ENCODE measurements at regions of chr3 and their contacts with region 1.

Region 1: GRCh38 chr3:46959161-46959511 is 17.4 kb downstream of the CCDC12 start:
- DNase-seq: peak; percentile 71
- ATAC-seq: peak; percentile 92
- H3K4me3 Mint-ChIP-seq: peak overlapping the region; percentile 2
- H3K27ac Mint-ChIP-seq: peak overlapping the region; percentile 88
- H3K4me1 Mint-ChIP-seq: peaks cover 86% of the 10 kb centered on the region
- H3K27me3 Mint-ChIP-seq: no peaks in the 10 kb centered on the region

Region 2: DNA sequence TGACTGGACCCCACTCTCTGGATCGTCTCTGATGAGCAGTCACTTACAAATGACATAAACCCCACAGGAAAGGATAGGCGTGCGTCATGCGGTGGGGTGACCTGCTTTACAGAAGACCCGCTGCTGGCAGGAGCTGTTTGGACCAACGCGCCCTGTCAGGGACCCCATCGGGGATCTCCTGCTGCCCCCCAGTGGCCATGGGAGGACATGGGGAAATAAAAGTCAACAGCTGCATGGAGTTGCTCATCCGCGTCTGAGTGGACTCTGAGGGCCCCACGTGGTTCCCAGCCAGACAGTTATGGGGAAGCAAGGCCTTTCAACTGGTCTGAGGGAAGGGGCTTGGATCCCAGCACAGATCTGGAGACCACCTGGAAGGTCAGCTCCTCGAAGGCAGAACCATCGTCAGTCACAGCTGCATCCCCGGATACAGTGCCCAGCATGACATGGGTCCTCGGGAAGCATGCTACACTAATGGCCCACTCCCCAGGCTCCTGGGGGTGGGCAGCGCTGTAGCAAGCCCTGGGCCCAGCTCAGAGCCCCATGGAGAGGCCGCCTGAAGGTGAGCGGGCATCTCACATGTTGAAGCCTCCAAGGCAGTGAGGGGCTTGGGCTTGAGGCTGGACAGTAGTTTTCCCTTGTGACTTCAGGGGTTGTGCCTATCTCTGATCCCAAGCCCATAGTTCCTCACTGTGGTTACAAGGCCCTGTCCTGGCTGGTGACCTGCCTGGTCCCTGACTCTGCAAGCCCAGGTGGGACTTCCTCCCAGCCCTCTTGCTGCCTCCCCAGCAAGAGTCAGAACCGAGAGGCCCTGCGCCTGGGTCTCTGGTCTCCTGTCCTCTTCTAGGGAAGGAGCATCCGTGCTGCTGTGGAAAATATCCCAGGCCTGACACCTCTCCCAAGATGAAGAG is 49.3 kb before region 1 on chr3:
- CTCF ChIA-PET with region 1: interaction called, 6 read pairs
- POLR2A ChIA-PET with region 1: interaction called, 10 read pairs
- intact Hi-C with region 1: no loop called
- DNase-seq: peak; percentile 91
- ATAC-seq: peak; percentile 96
- H3K4me3 Mint-ChIP-seq: no peak overlapping the region
- H3K27ac Mint-ChIP-seq: no peak overlapping the region
- H3K4me1 Mint-ChIP-seq: peaks cover 18% of the 10 kb centered on the region
- H3K27me3 Mint-ChIP-seq: no peaks in the 10 kb centered on the region

Region 3: DNA sequence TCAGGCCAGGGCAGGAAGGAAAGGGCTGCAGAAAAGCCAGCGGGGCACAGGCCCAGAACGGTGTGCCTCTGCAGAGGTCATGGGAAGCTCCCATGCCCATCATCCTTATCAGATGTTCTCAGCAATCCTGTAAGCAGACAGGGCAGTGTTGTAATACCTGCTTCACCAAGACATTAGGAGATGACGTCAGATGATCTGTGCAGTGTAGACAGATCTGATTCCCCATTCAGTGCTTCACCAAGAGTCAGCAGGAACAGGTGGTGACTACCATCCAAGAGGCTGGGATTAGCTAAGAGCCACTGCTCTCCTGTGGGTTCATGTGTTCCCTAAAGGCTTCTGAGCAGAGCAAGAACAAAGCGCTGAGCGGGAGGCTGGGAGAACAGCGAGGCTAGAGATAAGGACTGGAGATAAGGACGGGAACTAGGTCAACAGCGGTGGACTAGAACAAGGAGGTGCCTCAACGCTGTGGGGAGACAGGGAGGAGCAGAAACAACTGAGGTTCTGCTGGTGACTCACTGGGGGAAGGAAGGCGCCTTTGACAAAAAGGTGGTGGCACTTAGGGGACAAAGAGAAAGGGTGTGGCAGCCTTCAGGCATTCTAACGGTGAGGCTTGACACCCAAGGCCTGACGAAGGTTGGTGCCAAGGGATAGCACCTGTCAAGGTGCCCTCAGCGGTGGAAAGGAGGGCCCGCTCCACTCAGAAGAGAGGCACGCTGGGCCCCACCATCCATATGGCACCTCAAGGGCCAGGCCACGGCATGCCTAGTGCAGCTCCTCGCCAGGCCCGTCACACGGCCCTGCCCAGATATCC is 10.9 kb before region 1 on chr3:
- CTCF ChIA-PET with region 1: interaction called, 13 read pairs
- POLR2A ChIA-PET with region 1: interaction called, 8 read pairs
- intact Hi-C with region 1: loop called in 1 of 2 experiments (anchors 1 kb)
- DNase-seq: peak; percentile 77
- ATAC-seq: peak; percentile 81
- H3K4me3 Mint-ChIP-seq: peak overlapping the region; percentile 62
- H3K27ac Mint-ChIP-seq: peak overlapping the region; percentile 92
- H3K4me1 Mint-ChIP-seq: peaks cover 80% of the 10 kb centered on the region
- H3K27me3 Mint-ChIP-seq: no peaks in the 10 kb centered on the region

Region 4: GRCh38 chr3:47009225-47010110 is 50.3 kb after region 1 on chr3:
- CTCF ChIA-PET with region 1: no interaction called
- POLR2A ChIA-PET with region 1: no interaction called
- intact Hi-C with region 1: loop called in 1 of 2 experiments (anchors 2 kb)
- DNase-seq: peak; percentile 84
- ATAC-seq: peak; percentile 93
- H3K4me3 Mint-ChIP-seq: peak overlapping the region; percentile 57
- H3K27ac Mint-ChIP-seq: peak overlapping the region; percentile 58
- H3K4me1 Mint-ChIP-seq: peaks cover 4% of the 10 kb centered on the region
- H3K27me3 Mint-ChIP-seq: no peaks in the 10 kb centered on the region

Region 5: DNA sequence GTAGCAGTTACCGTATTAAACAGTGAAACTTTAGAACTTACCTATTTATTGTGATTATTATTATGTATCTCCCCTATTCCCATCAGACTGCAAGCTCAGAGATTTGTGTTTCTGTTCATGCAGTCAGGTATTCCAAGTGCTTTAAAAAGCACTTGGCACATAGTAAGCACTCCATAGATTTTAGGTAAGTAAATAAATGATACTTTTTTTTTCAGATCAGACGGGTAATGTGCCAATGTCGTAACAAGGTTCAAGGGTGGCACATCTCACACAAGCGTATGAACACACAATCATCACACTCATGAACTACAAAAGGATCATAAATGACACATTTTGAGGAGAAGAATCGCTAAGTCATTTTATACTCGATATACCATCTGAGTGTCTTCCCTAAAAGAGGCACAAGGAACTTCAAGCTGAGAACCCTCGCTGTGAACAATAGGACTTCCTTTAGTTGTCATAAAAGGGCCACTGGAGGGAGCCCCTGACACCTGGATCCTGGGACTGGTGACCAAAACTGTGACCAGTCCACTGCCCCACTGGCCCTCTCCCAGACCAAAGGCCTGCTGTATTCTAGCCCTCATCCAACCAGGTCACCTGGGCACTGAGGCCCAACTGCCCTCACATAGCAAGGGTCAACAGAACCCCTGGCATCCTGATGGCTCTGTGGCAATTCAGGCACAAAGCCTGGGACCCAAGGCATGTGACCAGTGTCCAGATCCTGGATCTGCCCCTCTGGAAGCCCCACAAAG is 291.3 kb after region 1 on chr3:
- CTCF ChIA-PET with region 1: no interaction called
- POLR2A ChIA-PET with region 1: no interaction called
- intact Hi-C with region 1: no loop called
- DNase-seq: no peak
- ATAC-seq: no peak
- H3K4me3 Mint-ChIP-seq: no peak overlapping the region
- H3K27ac Mint-ChIP-seq: no peak overlapping the region
- H3K4me1 Mint-ChIP-seq: no peaks in the 10 kb centered on the region
- H3K27me3 Mint-ChIP-seq: no peaks in the 10 kb centered on the region

Region 6: GRCh38 chr3:47315069-47315647 is 356.0 kb after region 1 on chr3:
- CTCF ChIA-PET with region 1: no interaction called
- POLR2A ChIA-PET with region 1: no interaction called
- intact Hi-C with region 1: no loop called
- DNase-seq: no peak
- ATAC-seq: no peak
- H3K4me3 Mint-ChIP-seq: no peak overlapping the region
- H3K27ac Mint-ChIP-seq: no peak overlapping the region
- H3K4me1 Mint-ChIP-seq: peaks cover 12% of the 10 kb centered on the region
- H3K27me3 Mint-ChIP-seq: no peaks in the 10 kb centered on the region

Region 7: GRCh38 chr3:47347217-47347801 is 388.2 kb after region 1 on chr3:
- CTCF ChIA-PET with region 1: no interaction called
- POLR2A ChIA-PET with region 1: no interaction called
- intact Hi-C with region 1: no loop called
- DNase-seq: no peak
- ATAC-seq: no peak
- H3K4me3 Mint-ChIP-seq: no peak overlapping the region
- H3K27ac Mint-ChIP-seq: no peak overlapping the region
- H3K4me1 Mint-ChIP-seq: peaks cover 2% of the 10 kb centered on the region
- H3K27me3 Mint-ChIP-seq: no peaks in the 10 kb centered on the region

Measured in activated CD4-positive, alpha-beta T cell treated with anti-CD3 and anti-CD28 coated beads for 36 hours (primary cell).